ENCODE measurements at regions of chr1 and their contacts with region 1.

Region 1: GRCh38 chr1:25616095-25616986 is at the start of gene MAN1C1:
- DNase-seq: peak; percentile 91 to 95 (median 94)
- ATAC-seq: peak; percentile 90 to 93 (median 92)
- H3K4me3 ChIP-seq: peak within 1 kb of the TSS; percentile 53 to 98 (median 88)
- H3K27ac ChIP-seq: peak within 1 kb of the TSS; percentile 74 to 94 (median 87)
- H3K4me1 ChIP-seq: peaks cover 0 to 53% (median 38%) of the 10 kb centered on the region in 12 donors
- H3K27me3 ChIP-seq: no peaks in the 10 kb centered on the region
- CTCF ChIP-seq: peak; percentile 23 to 66 (median 46)
- POLR2A ChIP-seq: peak in 1 of 2 donors; percentile 64
- total RNA-seq, gene MAN1C1: 10.5 to 25.7 (median 14.8) TPM

Region 2: DNA sequence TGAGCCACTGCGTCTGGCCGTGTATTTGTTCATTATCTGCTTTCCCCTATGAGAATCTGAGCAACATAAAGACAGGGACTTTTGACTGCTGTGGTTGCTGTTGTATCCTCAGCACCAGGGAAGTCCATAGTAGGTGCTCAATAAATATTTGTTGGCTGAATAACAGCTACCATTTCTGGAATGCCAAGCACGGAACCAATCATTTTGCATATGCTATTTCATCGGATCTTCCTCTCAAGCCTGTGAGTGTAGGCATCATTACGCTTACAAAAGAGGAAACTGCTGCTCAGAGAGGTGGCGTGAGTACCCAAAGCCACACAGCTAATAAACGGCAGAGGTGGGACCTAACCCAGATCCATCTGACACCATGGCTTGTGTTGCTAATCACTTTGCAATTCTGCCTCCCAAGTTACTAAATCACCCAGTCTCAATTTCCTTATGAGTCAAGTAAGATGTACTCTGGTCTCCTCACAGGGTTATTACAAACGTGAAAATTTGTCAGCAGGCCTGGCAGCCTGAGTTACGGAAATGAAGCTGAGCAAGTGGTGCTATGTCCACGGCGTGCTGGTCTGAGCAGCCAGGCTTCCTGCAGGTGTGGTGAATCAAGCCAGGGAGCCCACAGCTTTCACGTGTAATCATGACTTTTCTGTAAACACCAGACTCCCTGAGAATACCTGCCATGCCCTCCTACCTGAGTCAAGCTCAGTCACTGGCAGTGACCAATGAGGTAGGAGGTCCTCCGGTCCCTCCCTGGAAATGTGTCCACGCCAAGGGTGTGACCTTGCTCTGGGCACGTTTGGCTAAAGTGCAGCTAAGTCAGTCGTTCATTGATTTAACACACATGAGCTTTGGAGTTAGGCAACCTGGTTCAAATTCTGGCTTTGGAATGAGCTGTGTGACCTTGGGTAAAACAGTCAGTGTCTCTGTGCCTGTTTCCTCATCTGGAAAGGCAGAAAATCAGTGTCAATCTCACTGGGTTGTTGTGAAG is 190.9 kb before region 1 on chr1:
- intact Hi-C with region 1: loop called in 1 of 10 experiments (anchors 10 kb)
- DNase-seq: no peak
- ATAC-seq: no peak
- H3K4me3 ChIP-seq: no peak overlapping the region
- H3K27ac ChIP-seq: no peak overlapping the region
- H3K4me1 ChIP-seq: peaks cover 0 to 12% (median 5%) of the 10 kb centered on the region in 12 donors
- H3K27me3 ChIP-seq: no peaks in the 10 kb centered on the region
- CTCF ChIP-seq: no peak
- POLR2A ChIP-seq: no peak

Region 3: GRCh38 chr1:25658791-25659431 is 42.6 kb after region 1 on chr1:
- intact Hi-C with region 1: loop called in 3 of 10 experiments (anchors 5 kb)
- DNase-seq: peak in 4 of 5 donors; percentile 78 to 89 (median 86)
- ATAC-seq: peak; percentile 95 to 96 (median 95)
- H3K4me3 ChIP-seq: no peak overlapping the region
- H3K27ac ChIP-seq: peak overlapping the region in 11 of 12 donors; percentile 3 to 83 (median 74)
- H3K4me1 ChIP-seq: peaks cover 2 to 71% (median 40%) of the 10 kb centered on the region in 12 donors
- H3K27me3 ChIP-seq: no peaks in the 10 kb centered on the region
- CTCF ChIP-seq: no peak
- POLR2A ChIP-seq: no peak

Region 4: GRCh38 chr1:25695090-25695770 is 78.9 kb after region 1 on chr1:
- intact Hi-C with region 1: loop called in 7 of 10 experiments (anchors 2 to 5 kb)
- DNase-seq: peak; percentile 75 to 89 (median 77)
- ATAC-seq: peak; percentile 73 to 87 (median 82)
- H3K4me3 ChIP-seq: no peak overlapping the region
- H3K27ac ChIP-seq: peak overlapping the region; percentile 61 to 99 (median 86)
- H3K4me1 ChIP-seq: peaks cover 6 to 81% (median 51%) of the 10 kb centered on the region in 12 donors
- H3K27me3 ChIP-seq: no peaks in the 10 kb centered on the region
- CTCF ChIP-seq: peak in 8 of 12 donors; percentile 13 to 51 (median 29)
- POLR2A ChIP-seq: no peak

Region 5: GRCh38 chr1:25737130-25737529 is 120.8 kb after region 1 on chr1:
- intact Hi-C with region 1: loop called in 5 of 10 experiments (anchors 2 to 5 kb)
- DNase-seq: peak in 3 of 5 donors; percentile 48 to 60 (median 52)
- ATAC-seq: peak; percentile 44 to 58 (median 54)
- H3K4me3 ChIP-seq: no peak overlapping the region
- H3K27ac ChIP-seq: peak overlapping the region in 8 of 12 donors; percentile 1 to 71 (median 56)
- H3K4me1 ChIP-seq: peaks cover 0 to 44% (median 13%) of the 10 kb centered on the region in 12 donors
- H3K27me3 ChIP-seq: no peaks in the 10 kb centered on the region
- CTCF ChIP-seq: no peak
- POLR2A ChIP-seq: no peak

Region 6: DNA sequence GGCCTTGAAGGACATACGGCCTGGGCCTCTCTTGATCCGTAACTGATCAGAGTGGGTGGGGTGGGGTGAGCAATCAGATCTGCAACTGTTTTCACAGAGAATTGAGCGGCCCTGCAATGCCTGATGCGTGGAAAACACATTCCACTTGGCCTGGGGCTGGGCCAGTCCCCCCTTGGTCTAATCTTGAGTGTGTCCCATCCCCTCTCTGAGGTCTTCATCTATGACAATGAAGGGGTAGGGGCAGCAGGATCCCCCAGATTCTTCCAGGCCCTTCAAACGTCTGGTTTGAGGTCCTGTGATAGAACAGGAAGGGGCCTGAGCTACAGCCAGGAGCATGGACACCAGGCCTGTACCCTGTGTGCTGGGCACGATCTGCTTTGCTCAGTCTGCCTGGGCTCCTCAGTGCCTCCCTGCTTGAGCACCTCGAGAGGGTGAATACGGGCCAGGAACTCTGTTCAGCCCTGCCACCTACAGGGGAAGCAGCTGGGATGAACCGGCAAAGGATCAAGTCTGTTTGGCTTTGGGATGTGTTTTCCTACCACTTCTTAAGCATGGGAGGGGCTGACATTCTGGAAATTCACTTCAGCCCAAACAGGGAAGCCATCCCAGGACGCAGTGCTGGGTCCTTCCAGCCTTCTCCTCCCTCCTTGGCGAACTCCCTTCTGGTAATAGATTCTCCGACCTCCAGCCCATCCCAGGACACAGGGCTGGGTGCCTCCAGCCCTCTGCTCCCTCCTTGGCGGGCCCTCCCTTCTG is 127.7 kb after region 1 on chr1:
- intact Hi-C with region 1: loop called in 8 of 10 experiments (anchors 1 to 5 kb)
- DNase-seq: peak; percentile 76 to 88 (median 79)
- ATAC-seq: peak; percentile 86 to 91 (median 88)
- H3K4me3 ChIP-seq: no peak overlapping the region
- H3K27ac ChIP-seq: peak overlapping the region; percentile 81 to 99 (median 92)
- H3K4me1 ChIP-seq: peaks cover 0 to 39% (median 28%) of the 10 kb centered on the region in 12 donors
- H3K27me3 ChIP-seq: no peaks in the 10 kb centered on the region
- CTCF ChIP-seq: peak; percentile 27 to 73 (median 53)
- POLR2A ChIP-seq: no peak